Psoas muscle (tissue), 8 donors: ENCODE measurements at regions of chr3 and their contacts with region 1.

Region 1: GRCh38 chr3:187913617-187914291 is 168.5 kb upstream of the BCL6 start:
- DNase-seq: no peak
- ATAC-seq: peak in 1 of 4 donors; percentile 15
- H3K4me3 ChIP-seq: no peak overlapping the region
- H3K27ac ChIP-seq: peak overlapping the region; percentile 83
- H3K4me1 ChIP-seq: peaks cover 55% of the 10 kb centered on the region
- H3K27me3 ChIP-seq: no peaks in the 10 kb centered on the region
- CTCF ChIP-seq: no peak

Region 2: DNA sequence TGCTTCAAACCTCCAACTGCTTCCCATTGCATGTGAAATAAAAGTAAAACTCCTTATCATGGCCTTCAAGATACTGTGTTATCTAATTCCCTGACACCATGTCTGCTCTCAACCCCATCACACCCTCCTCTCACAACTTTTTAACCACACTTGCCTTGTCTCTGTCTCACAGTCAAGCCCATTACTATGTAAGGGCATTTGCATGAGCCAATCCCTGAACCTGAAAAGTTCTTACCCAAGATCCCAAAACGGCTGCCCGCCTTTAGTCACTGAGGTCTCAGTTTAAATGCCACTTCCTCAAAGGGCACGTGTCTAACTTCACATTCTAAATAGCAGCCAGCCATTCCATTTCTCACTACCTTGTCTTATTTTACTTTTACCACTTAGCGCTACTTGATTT is 326.7 kb before region 1 on chr3:
- intact Hi-C with region 1: no loop called
- DNase-seq: no peak
- ATAC-seq: no peak
- H3K4me3 ChIP-seq: no peak overlapping the region
- H3K27ac ChIP-seq: no peak overlapping the region
- H3K4me1 ChIP-seq: no peaks in the 10 kb centered on the region
- H3K27me3 ChIP-seq: peaks cover 0 to 5% (median 0%) of the 10 kb centered on the region in 3 donors
- CTCF ChIP-seq: no peak

Region 3: DNA sequence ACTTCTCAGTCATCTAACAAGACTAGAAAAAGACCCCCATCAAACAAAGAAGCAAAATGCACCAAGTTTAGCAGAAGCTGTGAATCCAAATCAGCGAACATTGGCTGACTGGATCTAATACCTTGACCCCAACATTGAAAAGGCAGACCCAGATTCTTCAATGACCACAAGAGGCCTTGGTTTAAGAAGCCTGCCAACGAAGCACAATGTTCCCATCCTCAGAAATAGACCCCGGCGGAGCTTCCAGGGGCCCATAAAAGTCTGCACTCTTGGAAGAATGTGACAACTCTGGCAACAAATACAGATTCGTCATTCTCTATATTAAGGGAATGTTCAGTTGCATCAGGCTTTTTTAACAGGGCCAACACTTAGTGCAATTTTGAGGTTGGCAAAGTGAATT is 55.7 kb before region 1 on chr3:
- intact Hi-C with region 1: loop called in 1 of 2 experiments (anchors 5 kb)
- DNase-seq: peak; percentile 29 to 81
- ATAC-seq: peak; percentile 73 to 91 (median 86)
- H3K4me3 ChIP-seq: no peak overlapping the region
- H3K27ac ChIP-seq: peak overlapping the region; percentile 58
- H3K4me1 ChIP-seq: peaks cover 16% of the 10 kb centered on the region
- H3K27me3 ChIP-seq: no peaks in the 10 kb centered on the region
- CTCF ChIP-seq: no peak

Region 4: DNA sequence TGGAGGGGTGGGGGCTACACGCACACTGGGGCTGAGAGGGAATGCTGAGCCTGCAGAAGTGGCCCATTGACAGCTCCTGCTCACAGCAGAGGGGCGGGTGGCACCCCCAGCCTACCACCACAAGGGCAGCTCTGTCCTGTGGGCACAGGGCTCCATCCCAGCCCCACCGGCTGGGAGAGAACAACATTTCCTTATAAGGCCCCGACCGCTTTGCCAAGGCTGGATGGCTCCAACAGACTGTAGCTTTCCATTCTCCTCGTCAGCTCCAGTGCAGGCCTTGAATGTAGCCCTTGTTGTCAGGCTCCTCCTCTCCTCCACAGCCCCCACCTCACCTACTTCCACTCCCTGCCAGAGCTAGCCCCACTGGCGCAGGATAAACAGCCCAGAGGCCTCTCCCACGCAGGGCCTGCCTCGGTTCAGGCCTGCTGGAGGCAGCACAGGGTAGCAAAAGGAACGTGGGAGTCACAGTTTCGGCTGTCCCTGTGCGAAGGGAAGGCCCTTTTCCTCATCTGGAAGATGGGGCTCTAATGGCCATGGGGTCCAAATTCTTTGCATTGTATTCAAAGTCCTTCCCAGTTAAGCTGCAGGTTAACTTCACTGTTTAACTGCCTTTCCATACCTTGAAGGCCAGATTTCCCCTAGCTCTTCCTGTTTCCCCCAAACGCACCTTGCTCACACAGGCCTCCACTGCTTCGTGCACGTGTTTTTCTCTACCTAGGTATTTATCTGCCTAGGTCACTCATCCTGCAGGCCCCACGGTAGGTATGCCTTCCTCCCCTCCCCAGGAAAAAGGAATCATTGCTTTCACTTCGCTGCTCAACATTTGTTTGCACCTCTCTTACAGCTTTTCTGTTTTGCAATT is 138.6 kb after region 1 on chr3:
- intact Hi-C with region 1: no loop called
- DNase-seq: peak; percentile 78 to 91
- ATAC-seq: peak; percentile 80 to 91 (median 86)
- H3K4me3 ChIP-seq: no peak overlapping the region
- H3K27ac ChIP-seq: peak overlapping the region; percentile 65
- H3K4me1 ChIP-seq: peaks cover 19% of the 10 kb centered on the region
- H3K27me3 ChIP-seq: no peaks in the 10 kb centered on the region
- CTCF ChIP-seq: no peak

Region 5: DNA sequence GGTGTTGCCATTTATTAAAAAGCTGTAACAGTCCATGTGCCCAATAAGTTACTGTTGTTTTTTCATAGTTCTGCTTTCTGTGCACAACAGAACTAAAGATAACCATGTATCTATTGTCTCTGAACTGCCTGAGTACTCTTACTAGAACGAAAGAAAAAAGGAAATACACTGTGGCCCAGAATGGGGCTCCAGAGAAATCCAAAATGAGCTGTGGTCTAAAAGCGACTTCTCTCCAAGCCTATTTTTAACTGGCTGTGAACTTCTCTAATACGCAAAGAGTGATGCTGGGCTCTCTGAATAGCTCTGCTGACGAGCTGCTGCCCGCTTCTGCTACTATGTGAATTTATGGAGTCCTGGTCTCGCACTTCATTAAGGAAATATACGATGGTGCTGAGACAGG is 184.0 kb after region 1 on chr3:
- intact Hi-C with region 1: no loop called
- DNase-seq: no peak
- ATAC-seq: peak; percentile 78 to 96 (median 94)
- H3K4me3 ChIP-seq: peak overlapping the region; percentile 15
- H3K27ac ChIP-seq: peak overlapping the region; percentile 68
- H3K4me1 ChIP-seq: no peaks in the 10 kb centered on the region
- H3K27me3 ChIP-seq: no peaks in the 10 kb centered on the region
- CTCF ChIP-seq: no peak